Cardiac septum (tissue), 1 donor: ENCODE measurements at regions of chr2 and their contacts with region 1.

Region 1: DNA sequence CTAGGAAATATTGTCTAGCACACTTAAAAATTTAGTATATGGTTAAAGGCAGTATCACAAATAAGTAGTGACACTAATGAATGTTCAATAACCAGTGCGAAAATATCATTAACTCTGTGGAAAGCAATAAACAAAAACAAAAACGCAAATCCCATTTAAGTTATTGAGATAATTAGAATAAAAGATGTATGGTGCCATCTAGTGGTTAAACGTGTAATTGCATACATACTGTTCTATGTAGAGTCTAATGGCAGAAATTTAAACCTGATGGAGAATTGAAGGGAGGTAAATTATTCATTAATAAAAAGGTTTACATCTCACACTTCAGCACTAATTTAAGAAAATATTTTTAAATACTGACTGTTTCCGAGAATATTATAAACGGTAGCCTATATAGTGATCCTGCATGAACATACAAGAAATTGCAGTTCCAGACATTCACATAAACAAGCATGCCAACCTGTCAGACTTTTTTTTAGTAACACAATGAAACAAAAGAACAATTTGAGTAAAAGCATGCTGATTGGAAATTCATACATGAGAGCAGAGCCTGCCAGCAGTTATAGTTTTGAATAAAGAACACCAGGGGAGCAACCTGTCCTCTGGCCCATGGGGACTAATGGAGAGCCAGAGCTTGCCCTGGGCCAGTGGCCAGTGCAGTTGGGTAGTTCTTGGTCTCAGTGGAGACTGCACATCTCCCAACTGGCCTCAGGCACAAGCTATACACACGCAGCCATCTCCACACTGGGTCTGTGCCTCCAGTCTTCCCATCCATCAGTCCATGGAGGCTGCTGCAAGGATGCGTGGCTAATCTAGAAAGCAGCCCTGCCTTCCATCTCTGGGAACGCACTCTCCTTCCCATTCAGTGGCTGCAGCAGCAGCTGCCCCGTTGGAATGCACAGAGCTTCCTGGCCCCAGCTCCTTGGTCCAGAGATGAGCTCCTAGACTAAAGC is 28.0 kb downstream of the GCG start:
- DNase-seq: no peak

Region 2: GRCh38 chr2:161586517-161587167 is 537.4 kb before region 1 on chr2:
- intact Hi-C with region 1: loop called (anchors 5 kb)
- DNase-seq: no peak

Region 3: DNA sequence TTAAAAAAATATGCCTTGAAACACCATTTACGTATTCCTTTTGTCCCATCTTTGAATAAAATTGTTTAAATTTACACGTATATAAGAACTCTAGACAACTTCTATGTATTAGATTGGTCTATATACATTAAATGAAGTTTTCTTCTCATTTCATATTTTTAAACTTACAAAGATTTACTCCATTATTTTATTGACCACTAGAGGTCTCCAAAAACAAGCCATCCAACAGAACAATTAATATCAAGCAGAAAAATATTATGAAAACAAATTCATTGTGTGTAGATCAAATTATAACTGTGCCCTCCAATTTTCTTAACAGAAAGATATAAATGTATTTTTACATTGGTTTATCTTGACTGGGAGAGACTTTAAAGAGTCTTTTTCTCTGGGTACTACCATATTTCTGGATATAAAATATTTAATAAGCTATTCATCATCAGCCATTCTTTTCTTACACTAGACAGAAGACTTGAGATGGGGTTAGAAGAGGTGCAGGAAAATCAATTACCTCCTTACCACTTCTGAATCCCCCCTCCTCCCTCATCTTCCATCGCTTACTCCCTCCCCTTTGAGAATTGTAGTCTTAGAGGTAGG is 116.5 kb before region 1 on chr2:
- intact Hi-C with region 1: loop called (anchors 1 kb)
- DNase-seq: no peak